Posterior vena cava (tissue), 2 donors: ENCODE measurements at regions of chr16 and their contacts with region 1.

Region 1: DNA sequence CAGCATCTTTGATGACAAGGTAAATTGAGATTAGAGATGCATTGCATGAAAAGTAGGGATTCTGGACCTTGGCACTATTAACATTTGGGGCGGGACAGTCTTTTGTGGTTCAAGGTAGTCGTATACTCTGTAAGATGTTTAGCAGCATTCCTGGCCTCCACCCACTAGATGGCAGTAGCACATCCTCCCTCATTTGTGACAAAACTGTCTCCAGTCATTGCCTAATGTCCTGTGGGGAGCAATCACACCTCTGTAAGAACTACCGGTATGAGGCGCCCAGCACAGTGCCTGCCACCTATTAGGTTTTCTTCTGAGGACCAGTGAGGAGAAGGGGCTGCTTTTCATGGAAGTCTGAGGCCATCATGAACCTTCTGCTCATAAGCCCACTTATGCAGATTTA is 180.8 kb downstream of the RBFOX1 start:
- DNase-seq: no peak

Region 2: GRCh38 chr16:7436306-7436705 is 77.1 kb before region 1 on chr16:
- intact Hi-C with region 1: no loop called
- DNase-seq: no peak

Region 3: DNA sequence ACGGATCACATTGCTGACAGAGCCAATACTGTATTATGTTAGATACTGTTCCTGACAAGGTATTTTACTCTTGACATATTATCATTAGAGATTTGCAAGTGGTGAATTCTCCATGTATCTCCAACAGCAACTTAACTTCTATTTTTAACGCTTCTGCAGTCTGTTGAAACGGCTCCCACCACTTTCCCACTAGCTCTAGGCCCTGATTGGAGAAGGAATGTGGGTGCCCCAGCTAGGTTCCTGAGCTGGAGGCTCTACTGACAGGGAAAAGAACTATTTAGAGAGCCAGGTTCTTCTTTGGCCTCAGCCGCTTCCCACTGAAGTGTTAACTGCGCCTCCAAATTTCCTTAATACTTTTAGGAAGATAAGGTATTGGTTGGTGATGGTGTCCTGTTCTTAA is 11.0 kb after region 1 on chr16:
- intact Hi-C with region 1: loop called in 1 of 2 experiments (anchors 1 kb)
- DNase-seq: no peak

Region 4: DNA sequence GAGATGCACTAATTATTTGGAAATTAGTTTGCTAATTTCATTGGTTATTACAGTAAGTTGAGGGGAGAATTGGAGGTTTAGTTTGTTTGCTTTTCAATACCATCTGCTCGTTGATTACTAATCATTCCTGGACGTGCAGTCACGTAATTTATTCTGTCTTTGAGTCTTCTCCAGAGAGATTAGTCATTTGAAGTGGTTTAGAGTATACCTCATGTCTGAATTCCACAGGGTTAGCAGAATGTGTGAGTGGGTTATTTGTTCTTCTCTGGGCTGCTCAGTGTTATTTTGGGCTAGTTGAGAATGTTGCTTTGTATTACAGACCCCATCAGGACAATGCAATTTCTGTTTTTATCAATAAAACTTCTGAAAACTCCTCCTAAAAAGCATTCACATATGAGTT is 84.2 kb after region 1 on chr16:
- intact Hi-C with region 1: loop called in 1 of 2 experiments (anchors 5 kb)
- DNase-seq: no peak

Region 5: GRCh38 chr16:7805686-7806407 is 292.4 kb after region 1 on chr16:
- intact Hi-C with region 1: no loop called
- DNase-seq: no peak